RWPE1 (cell line): ENCODE measurements at regions of chr16 and their contacts with region 1.

Region 1: GRCh38 chr16:31134625-31135547 is 641 bp downstream of the PRSS8 start:
- DNase-seq: peak; percentile 50
- H3K27ac ChIP-seq: peak overlapping the region; percentile 98
- CTCF ChIP-seq: no peak

Region 2: GRCh38 chr16:31117391-31118197 is 17.3 kb before region 1 on chr16 and contains the start of gene KAT8:
- CTCF ChIA-PET with region 1: interaction called, 4 read pairs
- POLR2A ChIA-PET with region 1: interaction called, 15 read pairs
- DNase-seq: peak; percentile 98
- H3K27ac ChIP-seq: peak within 1 kb of the TSS; percentile 92
- CTCF ChIP-seq: no peak

Region 3: GRCh38 chr16:31186176-31186575 is 51.3 kb after region 1 on chr16:
- CTCF ChIA-PET with region 1: no interaction called
- POLR2A ChIA-PET with region 1: no interaction called
- DNase-seq: no peak
- H3K27ac ChIP-seq: no peak overlapping the region
- CTCF ChIP-seq: no peak